Activated CD4-positive, alpha-beta memory T cell treated with anti-CD3 and anti-CD28 coated beads for 36 hours (primary cell): ENCODE measurements at regions of chr1 and their contacts with region 1.

Region 1: DNA sequence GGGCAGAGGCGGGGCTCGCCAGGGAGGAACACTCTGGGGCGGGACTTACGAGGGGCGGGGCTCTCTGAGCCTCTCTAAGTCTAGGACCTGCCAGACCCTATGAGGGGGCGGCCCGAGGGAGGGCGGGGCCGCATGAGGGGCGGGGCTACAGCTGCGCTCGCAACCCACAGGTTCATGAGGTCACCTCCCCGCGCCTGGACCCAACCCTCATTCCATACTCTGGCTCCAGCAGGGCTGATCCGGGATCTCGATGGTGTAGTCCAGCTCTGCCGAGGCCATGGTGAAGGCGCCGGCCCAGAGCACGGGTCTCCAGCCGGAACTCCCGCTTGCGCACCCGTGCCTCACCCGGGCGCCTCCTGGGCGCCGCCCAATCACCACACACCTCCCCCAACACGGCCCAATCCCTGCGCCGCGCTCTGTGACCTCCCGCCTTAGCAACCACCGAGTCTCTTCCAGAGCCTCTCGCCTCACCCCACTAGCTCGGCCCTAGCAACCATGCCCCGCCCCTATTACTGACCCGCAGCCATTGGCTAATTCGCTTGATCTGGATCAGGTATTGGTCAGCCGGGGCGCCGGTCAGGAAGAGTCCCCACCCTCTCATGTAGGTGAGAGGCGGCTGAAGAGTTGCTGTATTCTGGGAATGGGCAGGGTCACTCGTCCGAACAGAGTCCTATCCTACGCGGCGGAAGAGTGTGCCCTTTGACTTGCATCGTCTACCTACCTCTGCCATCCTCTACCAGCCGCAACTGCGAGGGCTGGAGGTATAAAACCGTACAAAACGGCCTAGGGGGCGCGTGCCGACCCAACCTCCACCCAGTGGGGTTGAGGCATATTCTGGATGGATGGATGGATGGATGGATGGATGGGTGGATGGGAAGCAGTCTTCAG is at the starts of genes ARMH1 and TMEM53:
- DNase-seq: peak; percentile 99
- H3K4me3 Mint-ChIP-seq: peak within 1 kb of the TSS; percentile 83
- H3K27ac Mint-ChIP-seq: peak within 1 kb of the TSS; percentile 88
- H3K4me1 Mint-ChIP-seq: peaks cover 23% of the 10 kb centered on the region
- H3K27me3 Mint-ChIP-seq: no peaks in the 10 kb centered on the region
- total RNA-seq, gene ARMH1: 134 to 141 TPM
- total RNA-seq, gene TMEM53: 5.1 to 6.5 TPM

Region 2: GRCh38 chr1:44294588-44295007 is 379.8 kb before region 1 on chr1:
- CTCF ChIA-PET with region 1: no interaction called
- POLR2A ChIA-PET with region 1: no interaction called
- intact Hi-C with region 1: no loop called
- DNase-seq: no peak
- H3K4me3 Mint-ChIP-seq: no peak overlapping the region
- H3K27ac Mint-ChIP-seq: no peak overlapping the region
- H3K4me1 Mint-ChIP-seq: no peaks in the 10 kb centered on the region
- H3K27me3 Mint-ChIP-seq: no peaks in the 10 kb centered on the region

Region 3: DNA sequence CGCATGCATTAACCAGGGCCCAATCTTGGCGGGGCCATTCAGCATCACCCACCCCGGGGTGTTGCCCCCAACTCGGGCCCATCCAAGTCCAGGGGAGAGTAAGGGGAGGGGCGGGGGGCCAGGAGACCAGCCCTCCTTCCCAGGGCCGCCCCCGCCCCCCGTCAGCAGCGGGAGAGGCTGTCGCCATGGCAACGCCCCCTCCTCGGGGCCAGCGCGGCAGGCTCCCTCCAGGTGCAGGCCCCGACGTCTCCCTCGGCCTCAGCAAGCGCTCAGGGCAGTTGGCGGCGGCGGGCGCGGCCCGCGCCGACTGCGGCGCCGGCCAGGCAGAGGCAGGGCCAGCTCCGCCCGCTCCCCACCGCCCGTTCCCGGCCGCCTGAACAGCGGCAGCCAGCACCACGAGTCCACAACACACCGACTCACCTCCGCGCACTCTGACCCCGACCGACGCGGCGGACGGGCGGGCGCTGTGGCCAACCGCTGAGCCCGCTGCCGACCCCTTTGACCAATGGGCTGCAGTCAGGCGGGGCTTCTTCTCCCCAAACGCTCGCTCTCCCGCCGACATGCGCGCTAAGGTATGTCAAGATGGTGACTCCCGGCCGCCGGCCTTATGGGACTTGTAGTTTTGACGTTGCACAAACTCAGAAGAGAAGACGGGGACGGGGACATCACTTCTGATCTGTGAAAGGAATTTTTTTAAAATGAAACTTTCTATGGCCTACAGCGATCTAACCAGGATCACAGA is 319.3 kb before region 1 on chr1 and contains the start of gene ERI3:
- CTCF ChIA-PET with region 1: no interaction called
- POLR2A ChIA-PET with region 1: no interaction called
- intact Hi-C with region 1: loop called (anchors 1 kb)
- DNase-seq: peak; percentile 98
- H3K4me3 Mint-ChIP-seq: peak within 1 kb of the TSS; percentile 85
- H3K27ac Mint-ChIP-seq: peak within 1 kb of the TSS; percentile 54
- H3K4me1 Mint-ChIP-seq: peaks cover 32% of the 10 kb centered on the region
- H3K27me3 Mint-ChIP-seq: no peaks in the 10 kb centered on the region
- total RNA-seq, gene ERI3: 35.7 to 37.0 TPM

Region 4: GRCh38 chr1:44714944-44715571 is 40.7 kb after region 1 on chr1:
- CTCF ChIA-PET with region 1: interaction called, 5 read pairs
- POLR2A ChIA-PET with region 1: interaction called, 4 read pairs
- intact Hi-C with region 1: loop called (anchors 5 kb)
- DNase-seq: peak; percentile 78
- H3K4me3 Mint-ChIP-seq: peak overlapping the region; percentile 37
- H3K27ac Mint-ChIP-seq: no peak overlapping the region
- H3K4me1 Mint-ChIP-seq: peaks cover 46% of the 10 kb centered on the region
- H3K27me3 Mint-ChIP-seq: no peaks in the 10 kb centered on the region